PC-9 (cell line): ENCODE measurements at regions of chrX and their contacts with region 1.

Region 1: GRCh38 chrX:101595739-101596419 is 21.9 kb downstream of the ARMCX6 start:
- DNase-seq: peak; percentile 18 to 52
- H3K4me3 ChIP-seq: no peak overlapping the region
- H3K27ac ChIP-seq: no peak overlapping the region
- H3K4me1 ChIP-seq: no peaks in the 10 kb centered on the region
- H3K27me3 ChIP-seq: peaks cover 23% of the 10 kb centered on the region
- CTCF ChIP-seq: peak; percentile 81

Region 2: GRCh38 chrX:101617211-101618191 is 21.6 kb after region 1 on chrX and contains the start of gene ARMCX6:
- CTCF ChIA-PET with region 1: no interaction called
- POLR2A ChIA-PET with region 1: no interaction called
- intact Hi-C with region 1: no loop called
- DNase-seq: peak; percentile 41 to 47
- H3K4me3 ChIP-seq: peak within 1 kb of the TSS; percentile 71
- H3K27ac ChIP-seq: no peak within 1 kb of the TSS
- H3K4me1 ChIP-seq: peaks cover 1% of the 10 kb centered on the region; the same call in 1 of the 2 replicates
- H3K27me3 ChIP-seq: no peaks in the 10 kb centered on the region
- CTCF ChIP-seq: peak; percentile 52
- total RNA-seq, gene ARMCX6: 48.2 and 65.5 TPM in 2 replicates

Region 3: GRCh38 chrX:101799387-101799786 is 203.5 kb after region 1 on chrX:
- CTCF ChIA-PET with region 1: no interaction called
- POLR2A ChIA-PET with region 1: no interaction called
- intact Hi-C with region 1: loop called (anchors 5 kb)
- DNase-seq: peak; percentile 64 to 74
- H3K4me3 ChIP-seq: no peak overlapping the region
- H3K27ac ChIP-seq: no peak overlapping the region
- H3K4me1 ChIP-seq: no peaks in the 10 kb centered on the region
- H3K27me3 ChIP-seq: no peaks in the 10 kb centered on the region
- CTCF ChIP-seq: peak; percentile 79